Activated CD4-positive, alpha-beta T cell treated with anti-CD3 and anti-CD28 coated beads, Interleukin-2, amount 10 ng/mL, durations not matched to agents 24 days and 14 days (primary cell): ENCODE measurements at regions of chr5 and their contacts with region 1.

Region 1: GRCh38 chr5:141691867-141692532 is 10.0 kb upstream of the ARAP3 start:
- DNase-seq: peak; percentile 97
- H3K4me3 Mint-ChIP-seq: peak overlapping the region; percentile 85
- H3K27ac Mint-ChIP-seq: peak overlapping the region; percentile 86
- H3K4me1 Mint-ChIP-seq: peaks cover 32% of the 10 kb centered on the region
- H3K27me3 Mint-ChIP-seq: peaks cover 26% of the 10 kb centered on the region

Region 2: DNA sequence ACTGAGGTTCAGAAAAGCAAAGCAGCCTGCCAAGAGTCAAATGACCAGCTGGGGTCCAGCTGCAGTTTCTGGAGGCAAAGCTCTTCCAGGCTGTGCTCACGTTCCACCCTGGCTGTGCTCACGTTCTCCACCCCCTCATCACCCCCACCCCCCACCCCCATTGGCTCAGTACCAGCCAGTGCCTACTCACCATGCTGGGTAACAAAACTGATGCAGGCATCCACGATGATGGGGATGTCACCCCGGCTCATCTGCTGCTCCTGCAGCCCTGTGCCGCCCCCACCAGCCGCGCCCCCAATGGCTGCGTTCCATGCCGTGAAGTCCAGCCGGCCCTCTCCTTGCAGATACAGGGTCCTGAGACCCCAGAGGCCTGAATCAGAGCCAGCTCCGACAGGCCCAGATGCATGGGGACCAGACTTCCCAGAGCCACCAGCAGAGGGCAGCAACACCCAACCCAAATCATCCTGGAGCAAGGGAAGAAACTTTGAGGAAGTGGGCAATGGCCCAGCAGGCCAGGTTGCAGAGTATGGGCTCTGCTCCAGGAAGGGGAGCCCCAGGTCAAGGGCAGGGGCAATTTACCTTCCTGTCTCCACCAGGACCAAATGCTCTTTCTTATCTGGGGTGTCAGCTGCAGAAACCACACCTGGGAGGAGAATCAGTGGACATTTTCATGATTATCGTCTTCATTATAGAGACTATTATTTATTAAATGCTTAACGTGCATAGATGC is 27.1 kb before region 1 on chr5:
- intact Hi-C with region 1: loop called (anchors 2 kb)
- DNase-seq: peak; percentile 93
- H3K4me3 Mint-ChIP-seq: no peak overlapping the region
- H3K27ac Mint-ChIP-seq: peak overlapping the region; percentile 26
- H3K4me1 Mint-ChIP-seq: peaks cover 4% of the 10 kb centered on the region
- H3K27me3 Mint-ChIP-seq: no peaks in the 10 kb centered on the region

Region 3: DNA sequence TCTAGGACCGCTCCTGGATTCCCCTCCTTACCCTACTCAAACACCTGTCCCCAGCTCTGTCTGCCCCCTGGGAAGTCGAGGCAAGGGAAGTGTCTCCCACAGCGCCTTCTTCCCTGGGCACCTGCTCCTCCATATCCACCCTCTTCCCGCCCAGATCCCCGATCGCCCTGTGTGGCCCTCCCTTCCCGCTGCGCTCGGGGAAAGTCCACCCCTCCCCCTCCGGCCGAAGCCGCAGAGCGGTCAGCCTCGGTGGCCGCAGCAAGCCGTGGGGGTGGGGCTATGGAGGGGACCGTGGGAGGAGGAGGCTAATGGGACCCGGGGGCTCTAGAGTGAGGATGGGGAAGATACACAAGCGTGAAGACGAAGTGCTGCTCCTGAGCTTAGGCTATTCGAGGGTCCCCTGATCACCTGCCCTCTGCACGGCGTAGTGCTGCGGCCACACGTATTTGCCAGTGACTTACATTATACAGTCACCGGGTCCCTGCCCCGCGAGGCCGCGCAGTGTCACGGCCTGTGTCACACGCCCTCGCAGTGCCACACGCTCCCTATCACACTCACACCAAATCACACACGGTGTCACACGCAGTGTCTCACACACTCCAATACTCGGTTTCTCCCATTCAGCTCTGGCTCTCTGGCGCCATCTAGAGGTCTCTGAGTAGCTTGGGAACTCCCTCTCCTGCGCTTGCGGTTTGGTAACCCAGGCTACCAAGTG is 186.9 kb after region 1 on chr5:
- intact Hi-C with region 1: loop called (anchors 1 kb)
- DNase-seq: peak; percentile 97
- H3K4me3 Mint-ChIP-seq: peak overlapping the region; percentile 79
- H3K27ac Mint-ChIP-seq: peak overlapping the region; percentile 39
- H3K4me1 Mint-ChIP-seq: peaks cover 22% of the 10 kb centered on the region
- H3K27me3 Mint-ChIP-seq: peaks cover 78% of the 10 kb centered on the region

Region 4: DNA sequence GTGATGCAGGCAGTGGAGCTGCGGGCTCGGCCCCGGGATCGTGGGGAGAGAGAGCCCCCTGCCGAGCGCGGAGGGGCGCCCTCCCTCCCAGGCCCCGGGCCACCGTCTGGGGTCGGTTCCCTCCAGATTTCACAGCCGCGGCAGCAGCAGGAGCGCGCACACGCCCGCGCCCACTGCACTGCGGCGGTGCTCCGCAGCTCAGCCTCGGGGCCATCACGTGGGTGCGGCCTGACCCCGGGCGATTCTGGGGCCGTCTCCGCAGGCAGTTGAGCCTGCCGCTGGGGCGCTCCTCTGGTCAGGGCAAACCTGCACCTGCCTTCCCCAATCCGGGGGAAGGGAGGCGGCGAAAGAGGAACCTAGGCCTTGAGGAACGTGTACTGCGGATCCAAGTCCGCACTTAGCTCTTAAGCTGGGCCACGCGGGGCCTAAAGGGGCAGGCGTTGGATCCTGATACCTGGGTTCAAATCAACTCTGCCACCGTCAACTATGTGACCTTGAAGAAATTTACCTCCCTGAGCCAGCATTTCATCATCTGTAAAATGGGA is 222.3 kb after region 1 on chr5:
- intact Hi-C with region 1: no loop called
- DNase-seq: peak; percentile 62
- H3K4me3 Mint-ChIP-seq: peak overlapping the region; percentile 13
- H3K27ac Mint-ChIP-seq: no peak overlapping the region
- H3K4me1 Mint-ChIP-seq: peaks cover 6% of the 10 kb centered on the region
- H3K27me3 Mint-ChIP-seq: peaks cover 47% of the 10 kb centered on the region

Region 5: GRCh38 chr5:141960449-141961202 is 268.6 kb after region 1 on chr5:
- intact Hi-C with region 1: loop called (anchors 1 kb)
- DNase-seq: peak; percentile 97
- H3K4me3 Mint-ChIP-seq: peak overlapping the region; percentile 69
- H3K27ac Mint-ChIP-seq: peak overlapping the region; percentile 90
- H3K4me1 Mint-ChIP-seq: peaks cover 39% of the 10 kb centered on the region
- H3K27me3 Mint-ChIP-seq: no peaks in the 10 kb centered on the region

Region 6: GRCh38 chr5:142145106-142145900 is 453.3 kb after region 1 on chr5:
- intact Hi-C with region 1: loop called (anchors 2 kb)
- DNase-seq: peak; percentile 89
- H3K4me3 Mint-ChIP-seq: no peak overlapping the region
- H3K27ac Mint-ChIP-seq: no peak overlapping the region
- H3K4me1 Mint-ChIP-seq: no peaks in the 10 kb centered on the region
- H3K27me3 Mint-ChIP-seq: no peaks in the 10 kb centered on the region